ENCODE measurements at regions of chr19 and their contacts with region 1.

Region 1: GRCh38 chr19:52823676-52824075 is 2.2 kb upstream of the ZNF28 start:
- DNase-seq: no peak
- H3K4me3 Mint-ChIP-seq: no peak overlapping the region
- H3K27ac Mint-ChIP-seq: no peak overlapping the region
- H3K4me1 Mint-ChIP-seq: peaks cover 13% of the 10 kb centered on the region
- H3K27me3 Mint-ChIP-seq: no peaks in the 10 kb centered on the region

Region 2: DNA sequence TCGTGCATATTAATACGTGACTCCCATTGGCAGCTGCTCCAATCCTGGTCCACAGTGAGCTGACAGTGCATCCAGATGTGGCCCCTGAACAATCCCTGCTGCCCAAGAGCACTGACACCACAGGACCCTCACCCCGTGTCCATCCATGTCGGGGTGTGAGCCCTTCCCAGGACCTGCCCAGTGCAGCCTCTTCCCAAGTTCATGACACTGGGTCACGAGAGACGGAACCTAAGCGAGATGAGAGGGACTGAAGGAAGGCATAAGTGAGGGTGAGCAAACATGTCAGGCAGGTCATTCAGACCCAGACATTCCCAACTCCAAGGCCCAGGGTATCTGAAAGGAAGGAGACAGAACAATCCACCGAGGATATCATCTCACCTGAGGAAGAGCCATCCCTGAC is 30.2 kb after region 1 on chr19:
- intact Hi-C with region 1: loop called (anchors 2 kb)
- DNase-seq: no peak
- H3K4me3 Mint-ChIP-seq: no peak overlapping the region
- H3K27ac Mint-ChIP-seq: no peak overlapping the region
- H3K4me1 Mint-ChIP-seq: peaks cover 16% of the 10 kb centered on the region
- H3K27me3 Mint-ChIP-seq: no peaks in the 10 kb centered on the region

Measured in activated CD4-positive, alpha-beta T cell treated with anti-CD3 and anti-CD28 coated beads, Interleukin-2, amount 10 ng/mL, durations not matched to agents 24 days and 14 days (primary cell).